Activated CD4-positive, alpha-beta memory T cell treated with anti-CD3 and anti-CD28 coated beads, Interleukin-2, amount 10 ng/mL, durations not matched to agents 7 days and 5 days (primary cell): ENCODE measurements at regions of chr2 and their contacts with region 1.

Region 1: GRCh38 chr2:70132244-70133126 is 45.2 kb downstream of the PCBP1 start:
- DNase-seq: peak; percentile 53
- H3K4me3 Mint-ChIP-seq: peak overlapping the region; percentile 72
- H3K27ac Mint-ChIP-seq: peak overlapping the region; percentile 94
- H3K4me1 Mint-ChIP-seq: peaks cover 76% of the 10 kb centered on the region
- H3K27me3 Mint-ChIP-seq: no peaks in the 10 kb centered on the region

Region 2: GRCh38 chr2:69946351-69947077 is 186.0 kb before region 1 on chr2:
- CTCF ChIA-PET with region 1: no interaction called
- POLR2A ChIA-PET with region 1: interaction called, 10 read pairs
- DNase-seq: peak; percentile 80
- H3K4me3 Mint-ChIP-seq: peak overlapping the region; percentile 12
- H3K27ac Mint-ChIP-seq: peak overlapping the region; percentile 94
- H3K4me1 Mint-ChIP-seq: peaks cover 56% of the 10 kb centered on the region
- H3K27me3 Mint-ChIP-seq: peaks cover 2% of the 10 kb centered on the region

Region 3: GRCh38 chr2:70043252-70043875 is 89.1 kb before region 1 on chr2:
- CTCF ChIA-PET with region 1: no interaction called
- POLR2A ChIA-PET with region 1: interaction called, 18 read pairs
- DNase-seq: peak; percentile 89
- H3K4me3 Mint-ChIP-seq: peak overlapping the region; percentile 44
- H3K27ac Mint-ChIP-seq: peak overlapping the region; percentile 97
- H3K4me1 Mint-ChIP-seq: peaks cover 75% of the 10 kb centered on the region
- H3K27me3 Mint-ChIP-seq: no peaks in the 10 kb centered on the region

Region 4: GRCh38 chr2:70078384-70078783 is 54.1 kb before region 1 on chr2:
- CTCF ChIA-PET with region 1: interaction called, 147 read pairs
- POLR2A ChIA-PET with region 1: interaction called, 856 read pairs
- DNase-seq: no peak
- H3K4me3 Mint-ChIP-seq: no peak overlapping the region
- H3K27ac Mint-ChIP-seq: peak overlapping the region; percentile 75
- H3K4me1 Mint-ChIP-seq: peaks cover 51% of the 10 kb centered on the region
- H3K27me3 Mint-ChIP-seq: no peaks in the 10 kb centered on the region

Region 5: GRCh38 chr2:70190418-70191243 is 58.1 kb after region 1 on chr2 and contains the start of gene C2orf42:
- CTCF ChIA-PET with region 1: no interaction called
- POLR2A ChIA-PET with region 1: interaction called, 16 read pairs
- DNase-seq: peak; percentile 96
- H3K4me3 Mint-ChIP-seq: peak within 1 kb of the TSS; percentile 82
- H3K27ac Mint-ChIP-seq: peak within 1 kb of the TSS; percentile 87
- H3K4me1 Mint-ChIP-seq: peaks cover 23% of the 10 kb centered on the region
- H3K27me3 Mint-ChIP-seq: no peaks in the 10 kb centered on the region
- total RNA-seq, gene C2orf42: 28.8 to 32.2 TPM

Region 6: GRCh38 chr2:70226781-70227180 is 94.3 kb after region 1 on chr2:
- CTCF ChIA-PET with region 1: no interaction called
- POLR2A ChIA-PET with region 1: no interaction called
- DNase-seq: no peak
- H3K4me3 Mint-ChIP-seq: no peak overlapping the region
- H3K27ac Mint-ChIP-seq: peak overlapping the region; percentile 0
- H3K4me1 Mint-ChIP-seq: peaks cover 10% of the 10 kb centered on the region
- H3K27me3 Mint-ChIP-seq: no peaks in the 10 kb centered on the region